ENCODE measurements at regions of chr17 and their contacts with region 1.

Region 1: DNA sequence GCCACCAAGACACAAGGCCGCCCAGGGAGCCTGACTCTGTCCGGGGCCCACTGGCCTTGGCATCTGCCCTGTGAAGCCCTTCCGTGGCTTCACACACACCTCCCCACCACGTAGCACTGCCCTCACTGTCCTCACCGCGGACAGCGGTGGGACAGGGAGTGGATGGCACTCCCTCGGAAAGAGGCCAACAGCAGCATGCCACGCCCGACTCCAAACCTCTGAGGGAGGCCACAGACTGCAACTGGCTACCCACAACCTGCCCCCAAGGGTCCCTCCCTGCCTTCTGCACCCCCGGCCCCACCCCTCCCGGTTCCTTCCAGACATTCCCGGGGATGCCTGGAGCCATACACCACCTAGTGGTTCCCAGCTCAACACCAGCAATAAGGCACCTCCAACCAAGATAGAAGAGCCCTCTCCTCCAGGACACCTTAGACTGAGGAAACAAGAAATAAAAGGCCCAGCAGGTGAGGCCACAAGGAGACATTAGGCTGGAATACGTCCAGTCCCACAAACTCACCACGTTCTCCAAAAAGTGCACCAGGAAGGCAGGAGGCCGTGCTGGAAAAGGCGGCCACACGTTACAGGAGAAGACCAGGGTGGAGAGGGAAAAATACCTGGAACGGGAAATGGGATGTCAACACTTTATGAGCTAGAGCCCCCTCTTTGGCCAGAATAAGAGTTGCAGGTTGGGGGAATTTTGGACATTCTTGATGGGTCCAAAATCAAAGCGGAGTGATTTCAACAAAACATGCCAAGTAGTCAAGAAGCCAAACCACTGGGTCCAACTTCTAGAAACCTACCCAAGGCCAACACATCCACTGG is 310.0 kb downstream of the SOX9 start:
- DNase-seq: peak in 1 of 2 experiments; percentile 60
- H3K4me3 ChIP-seq: no peak overlapping the region
- H3K27ac ChIP-seq: no peak overlapping the region
- H3K4me1 ChIP-seq: peaks cover 0 to 3% (median 2%) of the 10 kb centered on the region in 4 experiments; a peak in 3 of 7 replicates
- H3K27me3 ChIP-seq: no peaks in the 10 kb centered on the region
- CTCF ChIP-seq: peak; percentile 48 to 65 (median 58)
- EP300 ChIP-seq: no peak
- POLR2A ChIP-seq: no peak
- RAD21 ChIP-seq: peak; percentile 69 to 72

Region 2: GRCh38 chr17:72338847-72339790 is 91.7 kb before region 1 on chr17:
- CTCF ChIA-PET with region 1: interaction called, 13 read pairs
- POLR2A ChIA-PET with region 1: no interaction called
- DNase-seq: no peak
- H3K4me3 ChIP-seq: no peak overlapping the region
- H3K27ac ChIP-seq: no peak overlapping the region
- H3K4me1 ChIP-seq: peaks cover 0 to 11% (median 0%) of the 10 kb centered on the region in 4 experiments; a peak in 2 of 7 replicates
- H3K27me3 ChIP-seq: peaks cover 0 to 2% (median 0%) of the 10 kb centered on the region in 4 experiments; a peak in 1 of 7 replicates
- CTCF ChIP-seq: no peak
- EP300 ChIP-seq: no peak
- POLR2A ChIP-seq: no peak
- RAD21 ChIP-seq: no peak

Region 3: GRCh38 chr17:72452286-72453173 is 21.7 kb after region 1 on chr17:
- CTCF ChIA-PET with region 1: interaction called, 13 read pairs
- POLR2A ChIA-PET with region 1: no interaction called
- DNase-seq: no peak
- H3K4me3 ChIP-seq: no peak overlapping the region
- H3K27ac ChIP-seq: no peak overlapping the region
- H3K4me1 ChIP-seq: 0 out of 7 replicates have a peak, but pooled peaks cover 0 to 2% (median 0%) of the 10 kb centered on the region in 4 experiments
- H3K27me3 ChIP-seq: no peaks in the 10 kb centered on the region
- CTCF ChIP-seq: no peak
- EP300 ChIP-seq: no peak
- POLR2A ChIP-seq: no peak
- RAD21 ChIP-seq: no peak

Region 4: DNA sequence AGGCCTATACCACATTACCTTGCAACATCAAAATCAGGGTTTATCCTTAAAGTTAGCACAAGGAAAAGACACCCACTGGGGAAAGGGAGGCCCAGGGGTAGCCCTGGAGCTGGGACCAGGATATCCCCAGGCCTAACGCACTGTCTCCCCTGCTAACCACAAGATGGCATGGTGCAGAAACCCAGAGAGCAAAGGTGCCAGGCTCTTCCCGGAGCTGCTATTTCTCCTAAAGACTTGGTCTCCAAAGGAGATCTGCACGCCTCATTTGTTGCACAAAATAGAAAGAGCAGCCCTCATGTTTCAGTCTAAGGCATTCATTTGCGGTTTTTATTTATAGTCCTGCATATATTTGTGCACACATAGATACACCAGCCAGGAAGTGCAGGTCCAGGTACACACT is 98.6 kb after region 1 on chr17:
- CTCF ChIA-PET with region 1: no interaction called
- POLR2A ChIA-PET with region 1: no interaction called
- DNase-seq: no peak
- H3K4me3 ChIP-seq: no peak overlapping the region
- H3K27ac ChIP-seq: no peak overlapping the region
- H3K4me1 ChIP-seq: no peaks in the 10 kb centered on the region
- H3K27me3 ChIP-seq: no peaks in the 10 kb centered on the region
- CTCF ChIP-seq: peak; percentile 4 to 41 (median 23); a peak in 3 of 4 replicates
- EP300 ChIP-seq: no peak
- POLR2A ChIP-seq: no peak
- RAD21 ChIP-seq: peak in 1 of 2 experiments; percentile 39; a peak in 2 of 4 replicates

Region 5: DNA sequence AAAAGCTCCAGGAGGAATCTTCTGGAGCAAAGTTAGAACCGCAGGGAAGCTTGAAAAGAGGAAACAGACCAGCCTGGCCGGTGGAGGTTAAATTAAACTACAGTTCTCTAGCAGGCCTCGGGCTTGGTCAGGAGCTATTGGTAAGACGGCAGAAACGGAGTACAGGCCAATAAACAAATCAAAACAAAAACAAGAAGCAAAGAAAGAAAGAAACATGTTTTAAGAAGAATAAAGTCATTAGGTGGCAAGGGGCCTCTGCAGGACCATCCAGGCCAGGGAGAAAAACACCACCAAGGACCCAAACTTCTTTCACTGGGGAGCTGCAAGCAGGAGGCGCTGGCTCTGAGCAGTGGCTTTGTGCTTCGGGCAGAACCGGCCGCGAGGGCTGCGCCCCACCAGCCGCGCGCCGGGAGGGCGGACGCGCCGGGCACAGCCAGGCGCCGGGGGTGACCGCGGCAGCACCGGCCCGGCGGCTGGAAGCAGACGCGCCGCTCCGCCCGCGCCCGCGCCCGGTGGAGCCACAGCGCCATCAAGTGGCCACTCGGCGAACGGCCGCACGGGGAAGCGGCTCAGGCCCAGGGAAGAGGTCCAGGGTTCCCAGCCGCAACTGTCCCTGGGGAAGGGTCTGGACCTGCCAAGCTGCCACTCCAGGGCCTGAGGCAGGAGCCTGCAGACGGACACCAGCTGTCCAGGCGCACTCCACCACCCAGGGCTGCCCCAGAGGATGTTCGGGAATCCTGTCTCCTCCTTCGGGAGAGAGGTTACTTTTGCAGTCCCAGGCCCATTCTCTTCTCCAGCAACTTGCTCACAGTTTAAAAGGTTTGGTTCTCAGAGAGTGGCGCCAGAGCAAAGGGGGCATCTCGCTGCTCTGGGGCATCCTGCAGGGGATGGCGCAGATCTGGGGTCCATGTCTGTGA is 109.4 kb after region 1 on chr17:
- CTCF ChIA-PET with region 1: interaction called, 14 read pairs
- POLR2A ChIA-PET with region 1: no interaction called
- DNase-seq: peak in 1 of 2 experiments; percentile 98
- H3K4me3 ChIP-seq: peak overlapping the region in 1 of 4 experiments; percentile 44; a peak in 2 of 8 replicates
- H3K27ac ChIP-seq: no peak overlapping the region
- H3K4me1 ChIP-seq: peaks cover 7 to 16% (median 10%) of the 10 kb centered on the region in 4 experiments
- H3K27me3 ChIP-seq: no peaks in the 10 kb centered on the region
- CTCF ChIP-seq: peak; percentile 84 to 90 (median 87)
- EP300 ChIP-seq: peak in 1 of 2 experiments; percentile 25; a peak in 1 of 3 replicates
- POLR2A ChIP-seq: no peak
- RAD21 ChIP-seq: peak; percentile 91

Measured in H1 (cell line).